Activated CD8-positive, alpha-beta memory T cell treated with anti-CD3 and anti-CD28 coated beads, Interleukin-2, amount 10 ng/mL, durations not matched to agents 7 days and 5 days (primary cell): ENCODE measurements at regions of chr22 and their contacts with region 1.

Region 1: DNA sequence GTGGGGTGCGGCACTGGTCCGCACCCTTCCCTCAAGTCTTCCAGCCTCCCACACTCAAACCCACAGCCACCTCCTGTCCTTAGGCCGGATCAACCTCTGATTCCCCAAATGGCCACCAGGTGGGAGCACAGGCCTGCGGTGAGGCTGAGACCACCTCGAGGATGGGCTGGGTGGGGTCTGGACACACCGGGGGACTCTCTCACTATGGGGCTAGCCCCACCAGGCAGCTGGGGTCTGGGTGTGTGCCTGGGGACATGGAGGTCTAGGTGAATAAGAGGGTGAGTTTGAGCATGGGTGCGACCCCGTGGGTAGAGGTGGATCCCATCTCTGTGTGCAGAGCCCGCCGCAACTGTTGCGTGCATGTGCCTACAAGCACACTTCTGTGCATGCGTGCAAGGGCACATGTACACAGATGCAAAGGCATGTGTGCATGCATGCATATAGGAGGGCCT is 32.6 kb downstream of the MYO18B start:
- DNase-seq: no peak
- ATAC-seq: no peak
- H3K4me3 Mint-ChIP-seq: no peak overlapping the region
- H3K27ac Mint-ChIP-seq: no peak overlapping the region
- H3K4me1 Mint-ChIP-seq: peaks cover 19% of the 10 kb centered on the region
- H3K27me3 Mint-ChIP-seq: no peaks in the 10 kb centered on the region

Region 2: GRCh38 chr22:25465949-25466348 is 308.7 kb before region 1 on chr22:
- CTCF ChIA-PET with region 1: interaction called, 45 read pairs
- DNase-seq: no peak
- ATAC-seq: no peak
- H3K4me3 Mint-ChIP-seq: no peak overlapping the region
- H3K27ac Mint-ChIP-seq: peak overlapping the region; percentile 70
- H3K4me1 Mint-ChIP-seq: peaks cover 15% of the 10 kb centered on the region
- H3K27me3 Mint-ChIP-seq: no peaks in the 10 kb centered on the region

Region 3: GRCh38 chr22:25564320-25564978 is 210.2 kb before region 1 on chr22 and contains the start of gene GRK3:
- CTCF ChIA-PET with region 1: interaction called, 18 read pairs
- DNase-seq: peak; percentile 86
- ATAC-seq: peak; percentile 88
- H3K4me3 Mint-ChIP-seq: peak within 1 kb of the TSS; percentile 96
- H3K27ac Mint-ChIP-seq: peak within 1 kb of the TSS; percentile 90
- H3K4me1 Mint-ChIP-seq: peaks cover 51% of the 10 kb centered on the region
- H3K27me3 Mint-ChIP-seq: peaks cover 5% of the 10 kb centered on the region
- total RNA-seq, gene GRK3: 34.1 to 43.3 TPM

Region 4: DNA sequence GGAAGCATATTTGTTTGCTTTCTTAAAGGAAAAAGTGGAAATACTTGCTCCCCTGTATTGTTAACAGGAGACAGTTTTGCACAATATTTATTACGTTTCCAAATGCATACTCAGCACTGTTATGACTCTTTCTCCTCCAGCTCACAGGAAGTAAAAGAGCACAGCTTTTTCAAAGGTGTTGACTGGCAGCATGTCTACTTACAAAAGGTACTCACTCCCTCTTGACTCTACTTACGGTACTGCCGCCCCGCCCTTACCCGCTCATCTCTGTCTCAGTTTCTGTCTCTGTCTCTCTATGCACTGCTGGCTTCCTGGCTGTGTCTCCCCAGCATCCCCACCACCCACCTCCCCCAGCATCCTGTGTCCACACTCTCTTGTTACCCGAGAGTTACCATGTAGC is 64.8 kb before region 1 on chr22:
- CTCF ChIA-PET with region 1: interaction called, 23 read pairs
- DNase-seq: peak; percentile 77
- ATAC-seq: peak; percentile 95
- H3K4me3 Mint-ChIP-seq: peak overlapping the region; percentile 19
- H3K27ac Mint-ChIP-seq: peak overlapping the region; percentile 89
- H3K4me1 Mint-ChIP-seq: peaks cover 41% of the 10 kb centered on the region
- H3K27me3 Mint-ChIP-seq: no peaks in the 10 kb centered on the region

Region 5: GRCh38 chr22:25747245-25747944 is 27.2 kb before region 1 on chr22:
- CTCF ChIA-PET with region 1: interaction called, 27 read pairs
- DNase-seq: no peak
- ATAC-seq: no peak
- H3K4me3 Mint-ChIP-seq: no peak overlapping the region
- H3K27ac Mint-ChIP-seq: peak overlapping the region; percentile 99
- H3K4me1 Mint-ChIP-seq: peaks cover 77% of the 10 kb centered on the region
- H3K27me3 Mint-ChIP-seq: no peaks in the 10 kb centered on the region

Region 6: DNA sequence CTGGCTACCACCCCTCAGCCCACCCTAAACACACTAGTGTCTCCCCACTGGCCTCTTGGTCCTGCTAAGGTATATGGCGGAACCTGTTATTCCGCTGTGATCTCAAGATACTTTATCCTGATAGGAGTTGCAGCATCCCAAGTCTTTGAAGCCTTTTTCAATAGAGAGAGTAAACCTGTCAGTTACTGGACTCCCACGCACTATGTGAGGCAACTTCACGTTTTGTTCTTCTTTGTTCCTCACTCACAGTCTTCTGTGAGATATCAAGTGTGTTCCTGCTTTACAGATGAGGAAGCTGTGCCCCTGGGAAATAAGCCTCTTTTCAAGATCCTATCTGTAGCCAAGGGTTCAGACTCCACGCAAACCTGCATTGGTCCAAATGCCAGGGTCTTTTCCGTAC is 95.2 kb after region 1 on chr22:
- CTCF ChIA-PET with region 1: no interaction called
- DNase-seq: no peak
- ATAC-seq: no peak
- H3K4me3 Mint-ChIP-seq: no peak overlapping the region
- H3K27ac Mint-ChIP-seq: no peak overlapping the region
- H3K4me1 Mint-ChIP-seq: no peaks in the 10 kb centered on the region
- H3K27me3 Mint-ChIP-seq: no peaks in the 10 kb centered on the region